ENCODE measurements at regions of chr14 and their contacts with region 1.

Region 1: DNA sequence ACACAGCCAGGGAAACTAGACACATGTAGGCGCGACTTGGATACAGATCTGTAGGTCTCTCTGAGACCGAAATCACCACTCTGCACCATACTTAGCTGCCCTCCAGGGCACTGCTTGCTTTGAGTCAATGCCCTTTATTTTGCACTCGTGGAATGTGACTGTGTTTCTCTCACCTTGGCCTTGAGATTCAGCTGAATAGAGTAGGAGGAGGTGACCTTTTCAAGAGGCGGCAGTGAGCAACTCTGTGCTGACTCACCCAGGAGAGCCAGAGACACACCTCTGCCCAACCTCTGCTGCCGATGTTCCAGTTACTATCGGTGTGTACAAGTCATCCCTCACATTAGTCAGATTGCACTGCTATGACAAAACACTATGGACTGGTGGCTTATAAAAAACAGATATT is 583.4 kb downstream of the VRK1 start:
- DNase-seq: peak; percentile 38
- H3K4me3 Mint-ChIP-seq: no peak overlapping the region
- H3K27ac Mint-ChIP-seq: peak overlapping the region; percentile 76
- H3K4me1 Mint-ChIP-seq: peaks cover 65% of the 10 kb centered on the region
- H3K27me3 Mint-ChIP-seq: no peaks in the 10 kb centered on the region

Region 2: DNA sequence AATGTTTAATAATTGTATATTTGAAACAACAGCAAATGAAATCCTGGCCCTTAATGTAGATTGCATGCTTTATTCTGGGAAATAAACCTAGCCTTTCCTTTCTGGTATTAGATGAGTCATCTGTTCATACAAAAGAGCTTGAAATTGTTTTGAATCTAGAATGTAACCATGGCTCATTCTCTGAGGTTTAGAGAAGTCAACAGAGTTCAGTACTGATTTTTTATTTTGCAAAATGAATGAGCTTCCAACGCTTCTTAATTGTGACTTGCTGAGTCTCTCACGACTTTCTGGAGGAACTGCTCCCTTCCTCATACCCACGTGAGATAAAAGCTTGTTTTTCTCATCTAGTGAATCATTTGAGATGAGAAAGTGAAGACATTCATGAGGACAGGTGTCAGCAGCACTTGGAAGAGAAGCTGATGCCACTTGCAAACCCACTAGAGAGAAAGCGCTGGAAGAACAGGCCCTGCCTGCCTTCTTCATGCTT is 73.7 kb before region 1 on chr14:
- intact Hi-C with region 1: loop called (anchors 1 kb)
- DNase-seq: no peak
- H3K4me3 Mint-ChIP-seq: no peak overlapping the region
- H3K27ac Mint-ChIP-seq: peak overlapping the region; percentile 84
- H3K4me1 Mint-ChIP-seq: peaks cover 53% of the 10 kb centered on the region
- H3K27me3 Mint-ChIP-seq: no peaks in the 10 kb centered on the region

Measured in activated T-helper 2 cell treated with anti-CD3 and anti-CD28 coated beads, Interferon-gamma antibody, Interleukin-2, Interleukin-4, amounts not matched to agents 10 μg/mL and 5 μg/mL and 100 μg/mL, durations not matched to agents 14 hours and 24 hours and 36 hours (primary cell).